Cardiac septum (tissue), 1 donor: ENCODE measurements at regions of chr11 and their contacts with region 1.

Region 1: DNA sequence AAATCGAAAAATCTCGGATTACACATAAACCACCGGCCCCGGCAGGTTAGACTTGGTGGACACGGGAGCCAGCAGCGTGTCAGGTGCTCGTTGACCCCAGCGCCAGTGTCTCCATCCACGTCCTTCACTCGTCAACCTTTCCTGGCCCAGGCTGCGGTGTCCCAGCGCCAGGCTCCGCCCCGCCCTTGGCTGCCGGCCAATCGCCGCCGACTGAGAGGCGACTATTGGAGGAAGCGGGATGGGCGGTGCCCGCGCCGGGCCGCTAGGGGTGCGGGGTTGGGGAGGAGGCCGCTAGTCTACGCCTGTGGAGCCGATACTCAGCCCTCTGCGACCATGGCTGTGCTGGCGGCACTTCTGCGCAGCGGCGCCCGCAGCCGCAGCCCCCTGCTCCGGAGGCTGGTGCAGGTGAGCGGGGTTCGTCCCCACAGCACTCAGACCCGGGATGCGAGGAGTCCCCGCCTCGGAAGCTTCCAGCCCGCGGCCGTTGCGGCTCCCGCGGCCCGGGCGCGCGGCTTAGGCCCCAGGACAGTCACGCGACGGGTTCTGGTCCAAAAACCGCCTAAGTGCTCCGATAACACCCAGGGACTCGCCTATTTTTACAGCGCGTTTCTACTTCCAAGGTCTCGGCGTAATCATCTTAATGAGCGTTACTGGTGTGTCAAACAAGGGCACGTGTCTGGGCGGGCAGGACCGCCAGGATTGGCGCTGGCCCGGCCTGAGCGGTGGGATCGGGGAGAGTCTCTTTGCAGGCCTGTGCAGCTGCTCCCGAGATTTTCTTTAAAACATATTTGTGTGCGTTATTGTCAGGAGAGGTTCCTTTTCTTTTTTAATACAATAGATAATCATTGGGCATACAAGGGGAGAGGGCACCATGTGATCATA is at the start of gene ACAT1:
- DNase-seq: peak; percentile 99
- total RNA-seq, gene ACAT1: 238 TPM

Region 2: DNA sequence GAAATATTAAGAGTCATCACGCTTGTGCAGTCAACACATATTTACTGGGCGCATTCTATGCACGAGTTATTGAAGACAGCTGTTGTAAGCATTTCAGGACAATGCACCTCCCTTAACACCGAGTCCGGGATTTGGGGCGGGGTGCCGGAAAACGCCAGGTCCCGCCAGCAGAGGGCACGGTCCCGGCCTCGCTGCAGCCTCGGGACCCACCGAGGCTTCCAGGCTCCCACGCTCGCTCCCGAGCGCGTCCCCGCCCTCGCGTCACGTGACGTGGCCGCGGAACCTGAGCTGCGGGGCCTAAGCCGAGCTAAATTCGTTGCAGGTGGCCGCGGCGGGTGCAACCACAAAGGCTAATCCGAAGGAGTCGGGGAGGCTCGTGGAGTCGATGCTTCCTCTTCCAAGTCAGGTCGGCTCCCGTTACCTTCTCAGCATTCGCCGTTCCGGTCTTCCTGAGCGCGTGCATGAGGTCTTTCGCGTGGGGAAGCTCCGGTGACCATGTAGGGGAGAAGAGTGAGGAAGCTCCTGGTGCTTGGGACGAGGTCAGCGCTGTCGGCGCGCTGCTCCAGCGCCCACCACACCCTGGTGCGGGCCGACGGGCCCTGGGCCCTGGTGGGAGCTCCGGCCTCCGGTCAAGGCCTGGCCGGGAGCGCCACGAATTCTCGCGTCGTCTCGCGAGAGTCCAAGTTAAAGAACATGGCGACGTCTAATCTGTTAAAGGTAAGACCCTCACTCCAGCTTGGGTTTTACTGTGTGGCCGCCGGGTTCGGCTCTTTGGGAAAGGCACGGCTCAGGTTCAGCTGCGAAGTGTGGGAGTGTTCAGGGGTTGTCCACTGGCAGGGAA is 112.6 kb before region 1 on chr11 and contains the start of gene CUL5:
- intact Hi-C with region 1: loop called (anchors 5 kb)
- DNase-seq: peak; percentile 96
- total RNA-seq, gene CUL5: 37.5 TPM

Region 3: GRCh38 chr11:108647701-108648527 is 526.4 kb after region 1 on chr11:
- intact Hi-C with region 1: loop called (anchors 5 kb)
- DNase-seq: peak; percentile 84